Calu3 (cell line): ENCODE measurements at regions of chr6 and their contacts with region 1.

Region 1: GRCh38 chr6:33288921-33289748 is at the starts of genes PFDN6 and WDR46:
- DNase-seq: peak; percentile 82
- H3K4me3 Mint-ChIP-seq: peak within 1 kb of the TSS; percentile 81
- H3K27ac Mint-ChIP-seq: peak within 1 kb of the TSS; percentile 69
- H3K4me1 Mint-ChIP-seq: peaks cover 39% of the 10 kb centered on the region
- H3K27me3 Mint-ChIP-seq: no peaks in the 10 kb centered on the region
- CTCF ChIP-seq: no peak
- total RNA-seq, gene PFDN6: 141 and 168 TPM in 2 replicates
- total RNA-seq, gene WDR46: 124 and 125 TPM in 2 replicates

Region 2: GRCh38 chr6:33142501-33143070 is 146.5 kb before region 1 on chr6:
- CTCF ChIA-PET with region 1: interaction called, 14 read pairs
- intact Hi-C with region 1: no loop called
- DNase-seq: no peak
- H3K4me3 Mint-ChIP-seq: no peak overlapping the region
- H3K27ac Mint-ChIP-seq: no peak overlapping the region
- H3K4me1 Mint-ChIP-seq: no peaks in the 10 kb centered on the region
- H3K27me3 Mint-ChIP-seq: peaks cover 31% of the 10 kb centered on the region
- CTCF ChIP-seq: no peak

Region 3: GRCh38 chr6:33276864-33277662 is 12.1 kb before region 1 on chr6 and contains the start of gene B3GALT4:
- CTCF ChIA-PET with region 1: interaction called, 10 read pairs
- intact Hi-C with region 1: no loop called
- DNase-seq: peak; percentile 96
- H3K4me3 Mint-ChIP-seq: peak within 1 kb of the TSS; percentile 94
- H3K27ac Mint-ChIP-seq: peak within 1 kb of the TSS; percentile 100
- H3K4me1 Mint-ChIP-seq: peaks cover 60% of the 10 kb centered on the region
- H3K27me3 Mint-ChIP-seq: peaks cover 5% of the 10 kb centered on the region
- CTCF ChIP-seq: peak; percentile 74
- total RNA-seq, gene B3GALT4: 18.2 and 21.6 TPM in 2 replicates

Region 4: GRCh38 chr6:33299237-33299944 is 10.3 kb after region 1 on chr6:
- CTCF ChIA-PET with region 1: interaction called, 11 read pairs
- intact Hi-C with region 1: loop called (anchors 1 kb)
- DNase-seq: peak; percentile 97
- H3K4me3 Mint-ChIP-seq: peak overlapping the region; percentile 90
- H3K27ac Mint-ChIP-seq: peak overlapping the region; percentile 98
- H3K4me1 Mint-ChIP-seq: peaks cover 25% of the 10 kb centered on the region
- H3K27me3 Mint-ChIP-seq: no peaks in the 10 kb centered on the region
- CTCF ChIP-seq: peak; percentile 85